Esophagus squamous epithelium (tissue), 5 donors: ENCODE measurements at regions of chr7 and their contacts with region 1.

Region 1: DNA sequence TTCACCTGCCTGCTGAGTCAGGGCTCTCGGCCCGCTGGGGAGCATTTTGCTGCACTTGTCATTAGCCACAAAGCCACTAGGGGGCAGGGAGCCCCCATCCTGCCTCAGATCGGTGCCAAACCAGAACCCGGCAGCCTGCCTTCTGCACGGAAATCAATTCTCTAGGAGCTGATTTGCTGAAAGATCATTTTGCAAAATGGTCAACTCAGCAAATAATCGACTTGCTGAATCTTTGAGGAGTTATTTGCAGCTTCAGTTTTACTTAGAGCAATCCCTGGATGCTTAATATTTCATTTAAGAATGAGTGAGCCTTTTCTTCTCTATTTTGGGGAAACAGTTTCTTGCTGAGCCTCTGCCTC is 1.7 kb upstream of the GIMAP8 start:
- DNase-seq: peak; percentile 33
- H3K4me3 ChIP-seq: no peak overlapping the region
- H3K27ac ChIP-seq: peak overlapping the region in 3 of 4 donors; percentile 50 to 85 (median 84)
- H3K4me1 ChIP-seq: peaks cover 2 to 20% (median 10%) of the 10 kb centered on the region in 3 donors
- H3K27me3 ChIP-seq: peaks cover 0 to 18% (median 0%) of the 10 kb centered on the region in 4 donors
- CTCF ChIP-seq: peak; percentile 79 to 92 (median 84)
- POLR2A ChIP-seq: no peak

Region 2: GRCh38 chr7:150631866-150632864 is 183.4 kb after region 1 on chr7 and contains the start of gene GIMAP6:
- intact Hi-C with region 1: loop called (anchors 10 kb)
- DNase-seq: no peak
- H3K4me3 ChIP-seq: peak within 1 kb of the TSS; percentile 12 to 62 (median 42)
- H3K27ac ChIP-seq: peak within 1 kb of the TSS; percentile 51 to 86 (median 76)
- H3K4me1 ChIP-seq: peaks cover 0 to 24% (median 10%) of the 10 kb centered on the region in 3 donors
- H3K27me3 ChIP-seq: no peaks in the 10 kb centered on the region
- CTCF ChIP-seq: no peak
- POLR2A ChIP-seq: no peak
- total RNA-seq, gene GIMAP6: 3.1 to 30.1 (median 12.9) TPM

Region 3: DNA sequence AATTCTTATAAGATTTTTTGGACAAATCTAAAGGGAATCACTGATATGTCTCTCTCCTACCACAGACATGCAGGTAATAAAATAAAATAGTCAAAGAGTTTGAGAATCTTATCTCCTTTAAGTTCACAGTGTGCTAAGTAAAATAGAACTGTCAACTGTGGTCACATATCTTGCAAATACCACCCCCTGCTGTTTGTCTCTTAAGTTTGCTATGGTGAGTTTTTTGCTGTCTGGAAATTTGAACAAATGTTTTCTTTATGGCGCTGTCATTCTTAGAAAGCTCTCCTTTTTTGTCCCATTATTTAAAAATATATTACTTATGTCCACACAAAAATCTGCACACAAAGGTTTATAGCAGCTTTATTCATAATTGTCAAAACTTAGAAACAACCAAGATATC is 308.1 kb after region 1 on chr7:
- intact Hi-C with region 1: loop called (anchors 5 kb)
- DNase-seq: no peak
- H3K4me3 ChIP-seq: no peak overlapping the region
- H3K27ac ChIP-seq: peak overlapping the region in 1 of 4 donors; percentile 16
- H3K4me1 ChIP-seq: peaks cover 0 to 18% (median 0%) of the 10 kb centered on the region in 3 donors
- H3K27me3 ChIP-seq: no peaks in the 10 kb centered on the region
- CTCF ChIP-seq: peak in 4 of 6 experiments; percentile 25 to 46 (median 34)
- POLR2A ChIP-seq: no peak